Right cardiac atrium (tissue), 5 donors: ENCODE measurements at regions of chr2 and their contacts with region 1.

Region 1: DNA sequence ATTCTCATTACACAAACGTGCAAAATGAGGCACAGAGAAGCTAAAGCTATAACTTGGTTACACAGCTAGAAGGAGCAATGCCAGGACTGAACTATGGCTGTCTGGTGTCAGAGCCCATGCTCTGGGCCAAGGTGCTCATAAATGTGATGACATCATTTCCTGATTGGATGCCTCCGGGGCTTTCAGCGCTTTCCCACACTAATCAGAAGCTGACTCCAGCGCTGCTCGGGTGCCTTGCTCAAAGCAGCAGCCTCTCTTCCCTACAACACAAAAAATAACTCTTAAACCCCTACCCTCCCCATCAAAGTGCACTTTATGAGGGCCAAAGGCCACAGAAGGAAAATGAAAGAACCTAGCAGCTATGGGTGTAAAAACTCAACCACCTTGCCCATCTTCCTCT is 90.7 kb downstream of the STK39 start:
- DNase-seq: peak; percentile 43 to 69 (median 65)
- ATAC-seq: peak; percentile 76 to 80
- H3K4me3 ChIP-seq: no peak overlapping the region
- H3K27ac ChIP-seq: no peak overlapping the region
- H3K4me1 ChIP-seq: peaks cover 2% of the 10 kb centered on the region
- H3K27me3 ChIP-seq: no peaks in the 10 kb centered on the region

Region 2: GRCh38 chr2:168311261-168311910 is 154.7 kb after region 1 on chr2:
- intact Hi-C with region 1: loop called in 1 of 4 experiments (anchors 10 kb)
- DNase-seq: no peak
- ATAC-seq: peak in 1 of 2 donors; percentile 29
- H3K4me3 ChIP-seq: no peak overlapping the region
- H3K27ac ChIP-seq: no peak overlapping the region
- H3K4me1 ChIP-seq: peaks cover 2% of the 10 kb centered on the region
- H3K27me3 ChIP-seq: no peaks in the 10 kb centered on the region